Colonic mucosa (tissue), 4 donors: ENCODE measurements at regions of chr9 and their contacts with region 1.

Region 1: DNA sequence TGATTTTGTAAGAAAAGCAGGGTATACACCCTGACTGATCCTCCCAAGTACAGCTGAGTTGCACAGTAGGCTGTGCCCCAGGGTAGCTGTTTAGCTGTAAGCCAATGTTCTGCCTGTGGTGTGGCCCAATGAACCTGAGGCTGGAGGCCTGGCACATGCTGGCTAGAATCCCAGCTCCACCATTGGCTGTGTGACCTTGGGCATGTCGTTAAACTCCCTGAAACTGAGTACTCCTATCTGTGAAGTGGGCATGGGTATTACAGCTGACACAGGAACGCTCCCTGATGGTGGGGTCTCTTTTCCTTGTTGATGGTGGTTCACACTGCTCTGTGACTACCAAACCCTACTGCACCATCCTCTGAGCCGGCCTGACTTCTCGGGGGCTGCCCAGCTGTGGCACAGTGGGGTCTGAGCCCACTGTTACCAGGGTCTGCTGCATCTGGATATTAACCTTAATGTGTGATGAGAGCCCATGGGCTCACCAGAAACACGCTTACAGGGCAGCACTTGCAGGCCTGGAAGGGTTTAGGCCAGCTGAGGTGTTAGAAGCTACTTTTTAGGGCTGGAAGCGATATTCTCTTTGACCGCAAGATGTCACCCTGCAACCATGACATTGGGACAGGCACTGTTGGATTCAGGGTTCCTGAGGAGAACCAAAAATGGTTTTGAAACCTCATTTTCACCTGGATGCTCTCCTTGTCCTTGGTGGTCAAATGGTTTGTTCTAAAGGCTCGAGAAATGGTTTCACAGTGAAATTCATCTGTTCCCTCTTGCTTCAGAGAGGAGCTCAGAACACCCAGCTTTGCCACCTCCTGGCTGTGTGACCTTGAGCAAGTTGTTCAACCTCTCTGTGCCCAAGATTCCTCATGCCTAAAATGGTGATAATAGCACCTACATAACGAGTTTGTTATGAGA is 6.8 kb upstream of the GADD45G start:
- DNase-seq: peak; percentile 75
- H3K4me3 ChIP-seq: no peak overlapping the region
- H3K27ac ChIP-seq: no peak overlapping the region
- H3K4me1 ChIP-seq: no peaks in the 10 kb centered on the region
- H3K27me3 ChIP-seq: no peaks in the 10 kb centered on the region
- CTCF ChIP-seq: peak; percentile 71

Region 2: DNA sequence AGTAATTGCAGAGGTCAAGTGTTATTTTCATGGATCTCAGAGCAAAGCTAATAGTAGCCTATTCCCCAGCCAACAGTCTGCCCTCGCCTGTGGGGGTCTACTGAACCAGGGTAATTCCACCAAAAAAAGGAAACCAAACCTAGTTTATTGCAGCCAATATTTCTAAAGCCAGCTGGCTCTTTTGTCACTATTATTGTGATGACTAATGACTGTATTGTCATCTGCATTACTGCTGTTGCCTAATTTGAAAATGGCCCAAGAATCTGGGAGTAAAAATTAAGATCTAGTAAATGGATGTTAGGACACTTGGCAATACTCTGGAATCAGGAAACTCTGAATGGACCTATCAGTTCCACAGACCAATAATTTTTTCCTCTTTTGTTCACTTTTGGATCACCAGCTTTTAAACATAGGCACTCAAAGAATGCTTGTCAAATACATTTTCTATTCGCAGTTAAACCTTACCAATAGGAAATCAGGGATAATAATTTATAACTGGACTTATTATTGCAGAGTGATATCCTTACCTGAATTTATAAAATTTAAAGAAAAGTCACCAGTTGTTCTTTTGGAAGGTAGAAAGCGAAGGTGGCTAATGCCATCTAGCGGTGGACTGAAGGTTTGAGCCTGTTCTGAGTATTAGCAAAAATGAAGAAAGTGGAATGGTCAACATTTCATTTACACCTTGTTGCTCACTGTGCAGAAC is 1272.8 kb after region 1 on chr9:
- intact Hi-C with region 1: loop called (anchors 10 kb)
- DNase-seq: peak; percentile 41
- H3K4me3 ChIP-seq: no peak overlapping the region
- H3K27ac ChIP-seq: no peak overlapping the region
- H3K4me1 ChIP-seq: no peaks in the 10 kb centered on the region
- H3K27me3 ChIP-seq: no peaks in the 10 kb centered on the region
- CTCF ChIP-seq: peak; percentile 83